Endothelial cell of umbilical vein (primary cell): ENCODE measurements at regions of chr19 and their contacts with region 1.

Region 1: DNA sequence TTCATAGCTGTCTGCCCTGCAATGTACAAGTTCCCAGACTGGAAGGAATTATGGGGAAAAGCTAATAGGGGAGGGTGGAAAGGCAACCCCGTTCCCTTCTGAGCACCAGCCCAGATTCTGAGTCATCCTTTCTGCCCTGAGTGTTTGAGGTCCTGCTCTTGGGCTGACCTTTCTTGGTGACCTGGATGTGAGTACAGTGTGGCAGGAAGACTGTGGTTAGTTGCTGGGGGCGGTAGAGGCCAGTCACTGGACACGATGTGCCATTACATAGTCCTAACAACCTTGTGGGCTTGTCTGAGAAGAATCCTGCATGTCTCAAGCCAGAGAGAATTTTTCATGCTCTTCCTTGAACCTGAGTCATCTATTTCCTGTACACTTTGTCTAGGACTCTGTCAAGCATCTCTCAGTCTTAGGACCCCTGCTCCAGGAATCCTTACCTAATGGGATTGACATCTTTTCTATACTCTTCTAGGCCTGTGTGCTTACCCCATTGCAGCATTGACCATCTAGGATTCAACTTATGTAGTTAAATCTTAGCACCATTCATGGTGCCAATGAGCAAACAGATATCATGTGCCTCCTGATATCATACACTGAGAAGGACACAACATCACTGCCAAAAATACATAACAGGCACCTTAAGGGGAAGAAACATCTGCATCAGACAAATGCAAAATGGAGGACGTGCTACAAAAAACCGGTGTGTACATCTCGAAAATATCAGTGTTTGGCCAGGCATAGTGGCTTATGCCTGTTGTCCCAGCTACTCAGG is 8.1 kb upstream of the ANGPTL4 start:
- DNase-seq: peak; percentile 97
- H3K4me3 ChIP-seq: no peak overlapping the region
- H3K27ac ChIP-seq: peak overlapping the region; percentile 90
- H3K4me1 ChIP-seq: peaks cover 28% of the 10 kb centered on the region
- H3K27me3 ChIP-seq: no peaks in the 10 kb centered on the region
- CTCF ChIP-seq: no peak
- POLR2A ChIP-seq: peak; percentile 62

Region 2: DNA sequence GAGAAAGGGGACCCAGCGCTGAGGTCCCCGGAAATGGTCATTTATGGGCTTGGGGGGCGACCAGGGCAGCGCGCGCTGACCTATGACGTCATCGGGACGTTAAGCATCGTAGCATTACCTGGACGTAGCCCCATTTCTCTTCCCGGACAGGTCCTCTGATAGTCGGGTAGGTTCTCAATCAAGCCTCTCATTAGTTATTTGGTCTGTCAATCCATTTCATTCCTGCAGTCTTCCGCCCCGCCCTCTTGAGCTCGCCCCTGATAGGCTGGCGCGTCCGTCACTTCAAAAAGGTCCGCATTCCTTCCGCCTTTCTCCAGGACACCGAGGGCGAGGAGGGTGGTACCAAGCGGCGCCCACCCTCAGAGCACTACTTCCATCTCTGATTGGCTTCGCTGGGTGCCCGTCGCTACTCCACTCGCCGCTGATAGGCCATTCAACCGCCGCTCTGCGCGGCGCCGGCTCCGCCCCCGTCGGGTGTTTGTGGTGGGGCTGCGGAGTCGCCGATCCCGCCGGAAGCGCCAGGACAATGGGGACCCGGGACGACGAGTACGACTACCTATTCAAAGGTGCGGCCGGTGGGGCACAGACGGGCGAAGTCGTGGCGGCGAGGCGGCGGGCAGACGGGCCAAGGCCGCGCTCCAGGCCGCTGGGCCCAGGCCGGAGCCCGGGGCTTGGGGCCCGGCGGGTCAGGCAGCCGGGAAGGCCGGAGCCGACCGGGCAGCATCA is 34.2 kb after region 1 on chr19 and contains the start of gene RAB11B:
- CTCF ChIA-PET with region 1: interaction called, 52 read pairs
- POLR2A ChIA-PET with region 1: interaction called, 8 read pairs
- dilution Hi-C with region 1: no loop called
- intact Hi-C with region 1: loop called (anchors 1 kb)
- DNase-seq: peak; percentile 100
- H3K4me3 ChIP-seq: peak within 1 kb of the TSS; percentile 62 to 93 (median 69)
- H3K27ac ChIP-seq: peak within 1 kb of the TSS; percentile 97
- H3K4me1 ChIP-seq: peaks cover 23% of the 10 kb centered on the region
- H3K27me3 ChIP-seq: no peaks in the 10 kb centered on the region
- CTCF ChIP-seq: no peak
- POLR2A ChIP-seq: peak; percentile 54
- total RNA-seq, gene RAB11B: 92.2 and 99.8 TPM in 2 replicates

Region 3: GRCh38 chr19:8412783-8413628 is 57.2 kb after region 1 on chr19 and contains the start of gene MARCHF2:
- CTCF ChIA-PET with region 1: interaction called, 65 read pairs
- POLR2A ChIA-PET with region 1: interaction called, 12 read pairs
- dilution Hi-C with region 1: no loop called
- intact Hi-C with region 1: no loop called
- DNase-seq: peak; percentile 98
- H3K4me3 ChIP-seq: peak within 1 kb of the TSS; percentile 55 to 72 (median 57)
- H3K27ac ChIP-seq: peak within 1 kb of the TSS; percentile 69
- H3K4me1 ChIP-seq: peaks cover 9% of the 10 kb centered on the region
- H3K27me3 ChIP-seq: no peaks in the 10 kb centered on the region
- CTCF ChIP-seq: peak; percentile 31 to 65
- POLR2A ChIP-seq: peak; percentile 58
- total RNA-seq, gene MARCHF2: 40.1 and 43.5 TPM in 2 replicates

Region 4: GRCh38 chr19:8444645-8445487 is 89.0 kb after region 1 on chr19 and contains the start of gene HNRNPM:
- CTCF ChIA-PET with region 1: interaction called, 9 read pairs
- POLR2A ChIA-PET with region 1: no interaction called
- dilution Hi-C with region 1: no loop called
- intact Hi-C with region 1: loop called (anchors 2 kb)
- DNase-seq: peak; percentile 99
- H3K4me3 ChIP-seq: peak within 1 kb of the TSS; percentile 81 to 98 (median 84)
- H3K27ac ChIP-seq: peak within 1 kb of the TSS; percentile 93
- H3K4me1 ChIP-seq: peaks cover 25% of the 10 kb centered on the region
- H3K27me3 ChIP-seq: no peaks in the 10 kb centered on the region
- CTCF ChIP-seq: no peak
- POLR2A ChIP-seq: peak; percentile 77
- total RNA-seq, gene HNRNPM: 288 and 301 TPM in 2 replicates

Region 5: DNA sequence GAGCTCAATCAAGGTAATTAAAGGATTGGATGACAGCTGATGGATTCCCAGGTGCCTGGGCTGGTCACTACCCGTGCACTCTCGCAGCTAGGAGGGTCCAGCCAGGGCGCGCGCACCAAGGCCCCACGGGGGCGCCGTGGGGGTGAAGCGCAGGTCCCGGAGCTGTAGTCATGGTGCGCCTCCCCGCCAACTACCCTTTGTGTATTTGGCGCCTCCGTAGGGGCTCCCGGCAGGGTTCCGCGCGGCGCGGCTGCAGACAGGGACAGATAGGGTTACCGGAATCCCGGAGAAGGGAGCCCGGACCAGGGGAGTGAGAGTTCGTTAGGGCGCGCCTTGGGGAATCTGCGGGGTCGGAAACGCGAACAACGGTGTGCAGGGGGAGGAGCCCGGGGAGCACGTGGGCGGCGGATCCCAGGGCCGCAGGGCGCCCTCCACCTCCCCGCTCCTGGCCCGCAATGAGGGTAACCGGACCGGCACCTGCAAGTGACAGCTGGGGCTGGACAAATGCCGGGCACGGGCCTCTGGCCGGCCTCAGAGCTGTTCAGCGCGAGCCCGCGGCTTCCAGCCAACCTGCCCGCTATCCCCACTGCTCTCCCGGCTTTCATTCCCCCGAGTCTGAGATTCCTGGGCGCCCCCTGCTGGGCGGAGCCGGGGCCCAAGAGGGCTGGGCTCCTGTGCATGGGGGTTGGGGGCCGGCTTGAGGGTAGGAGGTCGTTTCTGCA is 150.0 kb after region 1 on chr19:
- CTCF ChIA-PET with region 1: interaction called, 40 read pairs
- POLR2A ChIA-PET with region 1: no interaction called
- dilution Hi-C with region 1: no loop called
- intact Hi-C with region 1: loop called (anchors 1 kb)
- DNase-seq: peak; percentile 68
- H3K4me3 ChIP-seq: peak overlapping the region; percentile 41 to 61 (median 55)
- H3K27ac ChIP-seq: no peak overlapping the region
- H3K4me1 ChIP-seq: peaks cover 8% of the 10 kb centered on the region
- H3K27me3 ChIP-seq: no peaks in the 10 kb centered on the region
- CTCF ChIP-seq: peak; percentile 86 to 92
- POLR2A ChIP-seq: no peak